Activated CD4-positive, alpha-beta T cell treated with anti-CD3 and anti-CD28 coated beads, Interleukin-2, amount 10 ng/mL, durations not matched to agents 7 days and 5 days (primary cell): ENCODE measurements at regions of chr1 and their contacts with region 1.

Region 1: GRCh38 chr1:167578939-167579521 is 25.5 kb upstream of the CREG1 start:
- DNase-seq: no peak
- H3K4me3 Mint-ChIP-seq: no peak overlapping the region
- H3K27ac Mint-ChIP-seq: no peak overlapping the region
- H3K4me1 Mint-ChIP-seq: no peaks in the 10 kb centered on the region
- H3K27me3 Mint-ChIP-seq: peaks cover 15% of the 10 kb centered on the region

Region 2: DNA sequence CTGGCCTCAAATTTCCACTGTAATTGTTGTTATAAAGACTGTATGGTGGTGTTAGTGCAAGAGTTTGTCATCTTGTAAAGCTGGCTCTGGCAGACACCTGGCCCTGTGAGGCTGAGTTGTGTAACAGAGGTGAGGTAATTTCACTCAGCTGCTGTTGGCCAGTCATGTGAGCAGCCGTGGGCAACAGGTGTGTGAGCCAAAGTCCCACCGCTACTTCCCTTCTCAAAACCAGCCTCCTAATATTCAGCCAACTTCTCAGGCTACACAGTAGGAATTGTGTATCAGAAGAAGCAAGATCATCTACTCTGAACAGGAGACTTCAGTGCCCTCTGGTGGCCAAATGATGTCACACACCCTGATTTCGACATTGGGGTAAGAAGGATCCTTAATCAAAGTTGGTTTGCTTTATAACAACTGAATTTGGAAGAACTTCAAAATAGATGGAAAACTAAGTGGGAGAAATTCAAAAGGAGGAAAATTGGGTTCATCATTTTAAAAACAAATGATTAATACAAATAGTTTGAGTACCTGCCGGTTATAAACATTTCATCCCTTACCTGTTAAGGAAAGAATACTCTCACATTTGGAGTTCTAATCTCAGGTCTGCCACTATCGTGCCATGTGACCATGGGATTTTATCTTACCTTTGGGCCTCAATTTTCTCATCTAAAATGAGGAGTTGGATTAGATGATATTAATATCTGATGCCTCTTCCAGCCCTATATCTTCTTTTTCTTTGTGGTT is 22.9 kb before region 1 on chr1:
- CTCF ChIA-PET with region 1: interaction called, 10 read pairs
- POLR2A ChIA-PET with region 1: no interaction called
- DNase-seq: peak; percentile 83
- H3K4me3 Mint-ChIP-seq: no peak overlapping the region
- H3K27ac Mint-ChIP-seq: no peak overlapping the region
- H3K4me1 Mint-ChIP-seq: peaks cover 21% of the 10 kb centered on the region
- H3K27me3 Mint-ChIP-seq: peaks cover 12% of the 10 kb centered on the region

Region 3: DNA sequence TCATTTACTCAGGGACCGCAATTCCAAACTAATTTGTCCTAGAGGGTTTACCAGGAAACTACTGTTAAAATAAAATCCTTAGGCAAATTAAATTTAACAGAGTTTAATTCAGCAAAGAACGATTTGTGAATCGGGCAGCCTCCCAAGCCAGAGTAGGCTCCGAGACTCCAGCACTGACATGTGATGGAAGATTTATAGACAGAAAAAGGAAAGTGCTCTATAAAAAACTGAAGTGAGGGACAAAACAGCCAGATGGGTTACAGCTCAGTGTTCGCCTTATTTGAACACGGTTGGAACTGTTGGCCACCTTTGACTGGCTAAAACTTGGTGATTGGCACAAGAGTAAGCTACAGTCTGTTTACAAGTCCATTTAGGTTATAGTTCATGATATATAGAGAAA is 15.8 kb after region 1 on chr1:
- CTCF ChIA-PET with region 1: no interaction called
- POLR2A ChIA-PET with region 1: no interaction called
- DNase-seq: no peak
- H3K4me3 Mint-ChIP-seq: no peak overlapping the region
- H3K27ac Mint-ChIP-seq: no peak overlapping the region
- H3K4me1 Mint-ChIP-seq: peaks cover 14% of the 10 kb centered on the region
- H3K27me3 Mint-ChIP-seq: peaks cover 5% of the 10 kb centered on the region